Lower leg skin (tissue), 4 donors: ENCODE measurements at regions of chr3 and their contacts with region 1.

Region 1: GRCh38 chr3:94548581-94549316 is 485.9 kb downstream of the NSUN3 start:
- DNase-seq: no peak
- H3K4me3 ChIP-seq: no peak overlapping the region
- CTCF ChIP-seq: no peak
- POLR2A ChIP-seq: no peak

Region 2: GRCh38 chr3:94568041-94568440 is 19.3 kb after region 1 on chr3:
- intact Hi-C with region 1: loop called (anchors 2 kb)
- DNase-seq: no peak
- H3K4me3 ChIP-seq: no peak overlapping the region
- CTCF ChIP-seq: no peak
- POLR2A ChIP-seq: no peak